Naive thymus-derived CD8-positive, alpha-beta T cell (primary cell): ENCODE measurements at regions of chr15 and their contacts with region 1.

Region 1: GRCh38 chr15:85689729-85690128 is 105.0 kb downstream of the KLHL25 start:
- DNase-seq: peak; percentile 55 to 85 (median 72)
- ATAC-seq: peak; percentile 90 to 92
- H3K4me3 Mint-ChIP-seq: peak overlapping the region; percentile 90 to 100 (median 97)
- H3K27ac Mint-ChIP-seq: peak overlapping the region; percentile 96 to 100 (median 98)
- H3K4me1 Mint-ChIP-seq: peaks cover 30 to 77% (median 72%) of the 10 kb centered on the region in 4 donors
- H3K27me3 Mint-ChIP-seq: no peaks in the 10 kb centered on the region

Region 2: DNA sequence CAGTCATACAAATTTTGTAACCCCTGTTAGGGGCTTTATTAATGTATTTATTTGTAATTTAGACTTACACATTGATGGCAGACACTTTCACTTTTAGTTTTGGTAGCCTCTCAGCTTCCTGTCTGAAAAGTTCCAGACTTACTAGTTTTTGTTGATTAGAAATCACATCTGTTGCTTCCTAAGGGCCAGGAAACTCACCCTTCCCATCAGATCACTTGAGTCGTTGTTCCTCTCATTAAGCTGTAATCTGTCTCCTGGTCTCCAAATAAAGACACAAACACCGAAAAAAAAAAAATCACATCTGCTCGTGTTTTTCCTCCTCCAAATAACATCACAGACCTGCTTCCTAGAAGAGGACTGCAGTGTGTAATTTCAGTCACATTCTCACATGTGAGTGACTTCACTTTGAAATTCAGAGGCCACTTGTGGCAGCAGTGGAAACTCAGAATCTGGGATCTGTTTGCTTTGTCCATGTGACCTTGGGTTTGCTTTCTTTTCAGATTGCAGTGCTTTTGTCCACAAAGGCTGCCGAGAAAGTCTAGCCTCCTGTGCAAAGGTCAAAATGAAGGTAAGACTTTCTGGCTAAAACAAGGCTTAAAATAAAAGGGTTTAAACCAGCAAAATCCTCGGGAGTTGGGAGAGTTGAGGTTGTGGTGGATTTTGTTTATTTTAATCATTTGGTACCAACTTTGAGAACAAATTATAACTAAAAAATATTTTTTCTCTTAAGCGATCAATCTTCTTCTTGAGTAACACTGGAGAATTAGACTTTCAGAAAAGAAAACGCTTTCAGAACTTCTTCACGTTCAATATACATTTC is 18.0 kb after region 1 on chr15:
- POLR2A ChIA-PET with region 1: interaction called, 54 read pairs
- DNase-seq: peak in 1 of 10 donors; percentile 72
- ATAC-seq: peak; percentile 42 to 46
- H3K4me3 Mint-ChIP-seq: peak overlapping the region; percentile 76 to 95 (median 87)
- H3K27ac Mint-ChIP-seq: peak overlapping the region; percentile 91 to 100 (median 99)
- H3K4me1 Mint-ChIP-seq: peaks cover 23 to 84% (median 67%) of the 10 kb centered on the region in 4 donors
- H3K27me3 Mint-ChIP-seq: no peaks in the 10 kb centered on the region

Region 3: DNA sequence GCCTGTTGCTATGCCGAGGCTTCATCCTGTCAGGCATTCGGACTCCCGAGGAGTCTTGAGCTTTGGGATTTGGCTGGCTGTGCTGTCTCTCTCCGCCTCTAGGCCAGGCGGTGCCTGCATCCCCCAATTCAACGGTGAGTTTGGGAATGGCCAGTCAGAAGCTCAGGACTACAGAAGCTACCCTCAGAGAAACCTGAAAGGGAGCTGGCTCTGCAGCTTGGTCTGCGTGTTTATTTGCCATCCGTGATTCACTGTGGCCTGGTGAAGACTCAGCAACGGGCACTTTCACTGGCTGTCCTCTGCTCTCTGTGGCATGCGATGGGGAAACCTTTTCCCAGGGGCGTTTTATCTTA is 208.2 kb after region 1 on chr15:
- POLR2A ChIA-PET with region 1: no interaction called
- DNase-seq: no peak
- ATAC-seq: no peak
- H3K4me3 Mint-ChIP-seq: no peak overlapping the region
- H3K27ac Mint-ChIP-seq: no peak overlapping the region
- H3K4me1 Mint-ChIP-seq: peaks cover 0 to 14% (median 8%) of the 10 kb centered on the region in 4 donors
- H3K27me3 Mint-ChIP-seq: peaks cover 34 to 71% (median 50%) of the 10 kb centered on the region in 5 donors